Posterior vena cava (tissue), 2 donors: ENCODE measurements at regions of chr17 and their contacts with region 1.

Region 1: GRCh38 chr17:53950207-53950857 is 127.6 kb downstream of the KIF2B start:
- DNase-seq: no peak

Region 2: GRCh38 chr17:52420555-52421078 is 1529.7 kb before region 1 on chr17:
- intact Hi-C with region 1: loop called in 1 of 2 experiments (anchors 10 kb)
- DNase-seq: no peak

Region 3: DNA sequence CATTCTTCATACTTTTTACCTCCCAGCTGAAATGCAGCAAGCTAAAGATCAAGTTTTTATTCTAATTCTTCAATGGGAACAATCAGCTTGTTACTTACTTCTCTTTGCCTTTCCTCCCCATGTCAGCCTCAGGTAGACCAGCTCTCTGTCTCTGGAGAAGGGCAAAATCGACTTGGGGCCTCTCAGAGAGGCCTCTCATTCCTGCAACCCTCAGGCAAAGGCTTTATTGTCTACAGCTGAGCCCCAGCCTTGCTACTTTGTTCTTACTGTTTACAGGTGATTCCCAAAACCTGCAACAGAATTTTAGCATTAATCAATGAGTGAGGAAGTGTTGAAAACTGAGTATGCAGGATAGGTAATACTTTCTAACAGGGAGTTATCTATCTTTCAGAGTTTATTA is 21.0 kb after region 1 on chr17:
- intact Hi-C with region 1: loop called in 1 of 2 experiments (anchors 1 kb)
- DNase-seq: no peak